ENCODE measurements at regions of chr2 and their contacts with region 1.

Region 1: GRCh38 chr2:163133602-163134001 is 295.0 kb upstream of the KCNH7 start:
- H3K4me3 ChIP-seq: no peak overlapping the region
- H3K27ac ChIP-seq: no peak overlapping the region
- H3K4me1 ChIP-seq: no peaks in the 10 kb centered on the region
- CTCF ChIP-seq: no peak

Region 2: DNA sequence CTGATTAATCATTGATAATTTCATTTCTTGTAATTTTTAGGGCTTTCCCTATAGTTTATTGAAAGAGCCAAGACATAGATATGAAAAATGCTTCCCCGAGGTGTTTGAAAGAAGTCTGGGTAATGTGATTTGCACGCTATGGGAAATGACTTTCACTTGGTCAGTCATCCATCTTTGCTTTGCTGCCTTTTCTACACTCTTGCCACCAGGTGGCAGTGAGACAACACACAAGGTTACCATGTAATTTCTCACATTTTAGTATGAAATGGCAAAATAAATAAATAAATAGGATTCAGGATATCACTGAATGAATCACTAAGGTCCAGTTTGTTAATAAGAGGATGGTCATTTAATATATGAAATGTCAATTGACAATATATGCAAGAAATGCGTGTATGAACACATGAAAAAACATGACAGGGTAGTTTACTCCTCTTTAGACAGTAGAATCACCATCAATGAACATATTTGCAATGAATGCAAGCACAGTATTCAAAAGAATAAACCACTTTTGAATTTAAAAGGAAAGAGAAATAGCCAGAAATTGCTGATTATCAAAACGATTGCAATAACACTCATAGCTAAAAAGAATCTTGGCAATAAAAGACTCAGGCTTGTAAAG is 242.8 kb before region 1 on chr2:
- CTCF ChIA-PET with region 1: interaction called, 13 read pairs
- POLR2A ChIA-PET with region 1: no interaction called
- H3K4me3 ChIP-seq: no peak overlapping the region
- H3K27ac ChIP-seq: no peak overlapping the region
- H3K4me1 ChIP-seq: no peaks in the 10 kb centered on the region
- CTCF ChIP-seq: 0 out of 2 replicates have a peak, but pooled peaks have one; percentile 33

Region 3: GRCh38 chr2:162945785-162946184 is 187.8 kb before region 1 on chr2:
- CTCF ChIA-PET with region 1: no interaction called
- POLR2A ChIA-PET with region 1: no interaction called
- H3K4me3 ChIP-seq: no peak overlapping the region
- H3K27ac ChIP-seq: no peak overlapping the region
- H3K4me1 ChIP-seq: no peaks in the 10 kb centered on the region
- CTCF ChIP-seq: no peak

Measured in HEK293 (cell line).